Activated T-helper 1 cell treated with anti-CD3 and anti-CD28 coated beads, Interleukin-12 subunit alpha, Interleukin-12 subunit beta, Interleukin-2, Interleukin-4 antibody, amounts not matched to agents 30 ng/mL and 10 ng/mL and 1 ng/mL, durations not matched to agents 14 hours and 24 hours and 36 hours (primary cell): ENCODE measurements at regions of chr10 and their contacts with region 1.

Region 1: DNA sequence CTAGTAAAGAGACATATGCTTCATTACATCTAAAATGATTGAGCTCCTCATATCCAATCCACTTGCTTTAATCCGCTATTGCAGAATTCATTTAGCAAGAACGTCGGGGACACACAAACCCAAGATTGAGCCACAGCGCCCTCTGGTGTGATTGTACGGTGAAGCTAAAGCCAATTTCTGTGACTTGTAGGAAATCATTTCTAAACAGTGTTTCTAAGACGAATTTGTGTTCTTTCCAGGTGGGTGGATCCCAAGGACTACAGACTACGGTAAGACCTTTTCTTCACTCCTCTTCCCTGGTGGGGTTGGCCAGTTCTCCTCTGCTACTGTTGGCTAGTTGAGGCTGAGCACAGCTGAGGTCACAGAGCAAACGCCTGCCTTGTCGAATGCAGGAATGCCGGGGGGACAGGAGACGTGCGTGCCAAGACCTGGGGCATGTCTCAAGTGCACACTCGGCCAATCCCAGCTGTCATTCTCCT is 5.2 kb downstream of the DMBT1 start:
- DNase-seq: peak; percentile 11
- H3K4me3 Mint-ChIP-seq: no peak overlapping the region
- H3K27ac Mint-ChIP-seq: no peak overlapping the region
- H3K4me1 Mint-ChIP-seq: no peaks in the 10 kb centered on the region
- H3K27me3 Mint-ChIP-seq: peaks cover 24% of the 10 kb centered on the region

Region 2: GRCh38 chr10:122126763-122127659 is 438.8 kb before region 1 on chr10:
- intact Hi-C with region 1: no loop called
- DNase-seq: no peak
- H3K4me3 Mint-ChIP-seq: no peak overlapping the region
- H3K27ac Mint-ChIP-seq: no peak overlapping the region
- H3K4me1 Mint-ChIP-seq: no peaks in the 10 kb centered on the region
- H3K27me3 Mint-ChIP-seq: peaks cover 9% of the 10 kb centered on the region

Region 3: DNA sequence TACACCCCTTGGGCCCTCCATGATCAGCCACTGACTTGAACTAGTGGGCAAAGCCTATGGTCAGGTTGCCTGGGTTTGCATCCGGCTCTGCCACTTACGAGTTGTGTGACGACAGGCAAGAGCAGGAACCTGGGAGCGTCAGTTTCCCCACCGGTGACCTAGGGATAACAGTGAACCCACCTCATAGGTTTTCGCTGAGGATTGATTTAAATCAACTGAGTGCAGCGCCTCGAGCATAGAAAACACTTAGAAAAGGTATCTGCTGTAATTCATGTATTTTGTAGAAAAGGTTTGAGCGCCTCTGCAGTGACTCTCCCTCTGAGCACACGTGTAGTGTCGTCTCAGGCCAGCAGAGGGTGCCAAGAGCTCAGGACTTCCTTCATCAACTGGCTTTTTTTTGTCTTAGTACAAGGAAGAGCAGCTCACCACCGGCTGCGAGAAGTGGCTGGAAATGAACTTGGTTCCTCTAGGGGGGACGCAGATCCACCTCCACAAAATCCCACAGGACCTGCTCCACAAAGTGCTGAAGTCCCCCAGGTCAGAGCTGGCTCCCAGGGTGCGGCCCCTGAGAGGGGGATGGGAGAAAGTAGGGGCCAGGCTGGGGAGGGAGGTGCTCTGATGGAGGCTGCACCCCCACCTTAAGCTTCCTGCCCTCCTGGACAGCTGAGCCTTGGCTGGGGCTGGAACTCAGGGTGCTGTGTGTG is 267.0 kb before region 1 on chr10:
- intact Hi-C with region 1: loop called (anchors 1 kb)
- DNase-seq: peak; percentile 19
- H3K4me3 Mint-ChIP-seq: no peak overlapping the region
- H3K27ac Mint-ChIP-seq: no peak overlapping the region
- H3K4me1 Mint-ChIP-seq: peaks cover 9% of the 10 kb centered on the region
- H3K27me3 Mint-ChIP-seq: peaks cover 9% of the 10 kb centered on the region

Region 4: GRCh38 chr10:122342293-122343134 is 223.3 kb before region 1 on chr10:
- intact Hi-C with region 1: loop called (anchors 1 kb)
- DNase-seq: peak; percentile 12
- H3K4me3 Mint-ChIP-seq: no peak overlapping the region
- H3K27ac Mint-ChIP-seq: no peak overlapping the region
- H3K4me1 Mint-ChIP-seq: no peaks in the 10 kb centered on the region
- H3K27me3 Mint-ChIP-seq: peaks cover 12% of the 10 kb centered on the region

Region 5: GRCh38 chr10:122435212-122435827 is 130.4 kb before region 1 on chr10:
- intact Hi-C with region 1: loop called (anchors 1 kb)
- DNase-seq: no peak
- H3K4me3 Mint-ChIP-seq: no peak overlapping the region
- H3K27ac Mint-ChIP-seq: no peak overlapping the region
- H3K4me1 Mint-ChIP-seq: no peaks in the 10 kb centered on the region
- H3K27me3 Mint-ChIP-seq: no peaks in the 10 kb centered on the region

Region 6: GRCh38 chr10:122510326-122510725 is 55.4 kb before region 1 on chr10:
- intact Hi-C with region 1: loop called (anchors 1 kb)
- DNase-seq: no peak
- H3K4me3 Mint-ChIP-seq: no peak overlapping the region
- H3K27ac Mint-ChIP-seq: no peak overlapping the region
- H3K4me1 Mint-ChIP-seq: peaks cover 6% of the 10 kb centered on the region
- H3K27me3 Mint-ChIP-seq: peaks cover 1% of the 10 kb centered on the region

Region 7: DNA sequence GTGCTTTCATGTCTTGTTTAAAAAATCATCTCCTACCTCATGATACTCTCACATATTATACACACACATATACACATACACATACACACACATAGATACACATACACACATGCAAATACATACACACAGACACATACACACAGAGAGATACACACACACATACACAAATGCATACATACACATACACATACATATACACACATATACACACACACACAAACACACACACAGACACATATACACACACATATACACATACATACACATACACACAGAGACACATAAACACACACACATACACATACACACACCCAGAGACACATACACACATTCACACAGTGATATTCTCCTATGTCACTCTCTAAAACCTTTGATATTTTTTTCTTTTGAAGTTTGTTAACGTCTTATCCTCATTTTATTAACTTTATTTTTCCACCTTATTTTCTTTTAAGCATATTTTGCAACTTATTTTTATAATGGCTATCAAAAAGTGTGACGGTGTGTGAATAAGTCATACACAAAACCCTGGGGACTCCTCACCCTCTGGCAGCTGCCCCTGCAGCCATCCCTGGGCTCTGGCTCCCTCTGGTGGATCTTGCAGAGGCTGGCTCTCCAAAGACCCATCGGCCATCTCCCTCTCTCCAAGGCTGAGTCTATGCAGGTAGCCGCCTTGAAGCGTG is 137.8 kb after region 1 on chr10:
- intact Hi-C with region 1: loop called (anchors 5 kb)
- DNase-seq: peak; percentile 4
- H3K4me3 Mint-ChIP-seq: no peak overlapping the region
- H3K27ac Mint-ChIP-seq: no peak overlapping the region
- H3K4me1 Mint-ChIP-seq: no peaks in the 10 kb centered on the region
- H3K27me3 Mint-ChIP-seq: no peaks in the 10 kb centered on the region

Region 8: GRCh38 chr10:123559066-123559822 is 993.5 kb after region 1 on chr10:
- intact Hi-C with region 1: loop called (anchors 2 kb)
- DNase-seq: peak; percentile 44
- H3K4me3 Mint-ChIP-seq: no peak overlapping the region
- H3K27ac Mint-ChIP-seq: no peak overlapping the region
- H3K4me1 Mint-ChIP-seq: no peaks in the 10 kb centered on the region
- H3K27me3 Mint-ChIP-seq: peaks cover 6% of the 10 kb centered on the region